Activated CD4-positive, alpha-beta memory T cell treated with anti-CD3 and anti-CD28 coated beads for 36 hours (primary cell): ENCODE measurements at regions of chr14 and their contacts with region 1.

Region 1: GRCh38 chr14:65804752-65805473 is 392.4 kb downstream of the FUT8 start:
- DNase-seq: peak; percentile 26
- H3K4me3 Mint-ChIP-seq: no peak overlapping the region
- H3K27ac Mint-ChIP-seq: no peak overlapping the region
- H3K4me1 Mint-ChIP-seq: peaks cover 8% of the 10 kb centered on the region
- H3K27me3 Mint-ChIP-seq: no peaks in the 10 kb centered on the region

Region 2: GRCh38 chr14:65170768-65171507 is 634.0 kb before region 1 on chr14:
- CTCF ChIA-PET with region 1: no interaction called
- POLR2A ChIA-PET with region 1: no interaction called
- intact Hi-C with region 1: loop called (anchors 5 kb)
- DNase-seq: peak; percentile 72
- H3K4me3 Mint-ChIP-seq: peak overlapping the region; percentile 68
- H3K27ac Mint-ChIP-seq: no peak overlapping the region
- H3K4me1 Mint-ChIP-seq: peaks cover 14% of the 10 kb centered on the region
- H3K27me3 Mint-ChIP-seq: peaks cover 6% of the 10 kb centered on the region

Region 3: GRCh38 chr14:65478596-65478995 is 326.3 kb before region 1 on chr14:
- CTCF ChIA-PET with region 1: no interaction called
- POLR2A ChIA-PET with region 1: no interaction called
- intact Hi-C with region 1: loop called (anchors 5 kb)
- DNase-seq: no peak
- H3K4me3 Mint-ChIP-seq: no peak overlapping the region
- H3K27ac Mint-ChIP-seq: no peak overlapping the region
- H3K4me1 Mint-ChIP-seq: peaks cover 70% of the 10 kb centered on the region
- H3K27me3 Mint-ChIP-seq: no peaks in the 10 kb centered on the region

Region 4: GRCh38 chr14:65723348-65723747 is 81.6 kb before region 1 on chr14:
- CTCF ChIA-PET with region 1: no interaction called
- POLR2A ChIA-PET with region 1: no interaction called
- intact Hi-C with region 1: no loop called
- DNase-seq: no peak
- H3K4me3 Mint-ChIP-seq: no peak overlapping the region
- H3K27ac Mint-ChIP-seq: no peak overlapping the region
- H3K4me1 Mint-ChIP-seq: peaks cover 18% of the 10 kb centered on the region
- H3K27me3 Mint-ChIP-seq: no peaks in the 10 kb centered on the region